ENCODE measurements at regions of chr2 and their contacts with region 1.

Region 1: DNA sequence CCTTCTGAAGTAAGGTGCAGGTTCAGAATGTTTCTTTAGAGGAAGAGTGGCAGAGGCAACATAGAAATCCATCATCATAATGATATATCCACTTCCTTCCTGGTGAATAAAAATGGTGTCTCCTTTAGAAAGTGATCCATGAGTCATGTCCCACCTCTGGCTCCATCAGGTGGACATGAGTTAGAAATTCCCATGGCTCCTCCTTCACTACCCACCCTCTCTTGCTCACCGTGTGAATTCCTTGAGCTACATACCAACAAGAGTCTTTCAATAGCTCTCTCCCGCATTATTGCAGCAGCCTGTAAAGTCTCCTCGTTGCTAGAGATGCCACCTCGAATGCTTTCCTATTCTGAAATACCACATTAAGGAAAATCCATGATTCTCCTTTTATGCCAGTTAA is 317.6 kb downstream of the LNPK start:
- DNase-seq: no peak
- H3K4me3 ChIP-seq: no peak overlapping the region
- H3K27ac ChIP-seq: no peak overlapping the region
- H3K4me1 ChIP-seq: no peaks in the 10 kb centered on the region
- H3K27me3 ChIP-seq: peaks cover 91% of the 10 kb centered on the region
- CTCF ChIP-seq: no peak

Region 2: GRCh38 chr2:175372704-175373701 is 311.5 kb before region 1 on chr2:
- intact Hi-C with region 1: loop called (anchors 10 kb)
- DNase-seq: no peak
- H3K4me3 ChIP-seq: no peak overlapping the region
- H3K27ac ChIP-seq: no peak overlapping the region
- H3K4me1 ChIP-seq: no peaks in the 10 kb centered on the region
- H3K27me3 ChIP-seq: peaks cover 56% of the 10 kb centered on the region
- CTCF ChIP-seq: no peak

Region 3: DNA sequence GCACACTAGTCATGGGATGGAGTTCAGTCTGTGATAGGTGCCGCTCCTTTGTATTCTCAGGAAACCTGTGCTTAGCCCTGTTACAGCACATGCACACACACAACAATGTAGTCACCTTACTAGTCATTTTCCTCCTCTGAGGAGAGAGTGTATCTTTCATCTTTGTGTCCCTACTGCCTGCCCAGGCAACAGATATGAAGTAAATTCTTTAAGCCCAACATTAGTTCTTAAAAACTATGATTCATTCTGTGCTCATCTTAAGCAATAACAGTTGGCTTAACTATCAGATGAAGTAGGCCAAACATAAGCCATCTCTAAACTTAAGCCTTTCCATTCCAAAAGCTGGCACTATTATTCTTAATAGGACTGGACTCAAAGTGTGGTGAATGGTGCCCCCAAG is 131.1 kb after region 1 on chr2:
- intact Hi-C with region 1: no loop called
- DNase-seq: no peak
- H3K4me3 ChIP-seq: no peak overlapping the region
- H3K27ac ChIP-seq: no peak overlapping the region
- H3K4me1 ChIP-seq: no peaks in the 10 kb centered on the region
- H3K27me3 ChIP-seq: no peaks in the 10 kb centered on the region
- CTCF ChIP-seq: no peak

Region 4: GRCh38 chr2:176088048-176088936 is 403.8 kb after region 1 on chr2:
- intact Hi-C with region 1: loop called (anchors 5 kb)
- DNase-seq: peak; percentile 53
- H3K4me3 ChIP-seq: peak overlapping the region; percentile 55
- H3K27ac ChIP-seq: no peak overlapping the region
- H3K4me1 ChIP-seq: peaks cover 43% of the 10 kb centered on the region
- H3K27me3 ChIP-seq: peaks cover 100% of the 10 kb centered on the region
- CTCF ChIP-seq: peak; percentile 82